CD14-positive monocyte (primary cell): ENCODE measurements at regions of chr11 and their contacts with region 1.

Region 1: DNA sequence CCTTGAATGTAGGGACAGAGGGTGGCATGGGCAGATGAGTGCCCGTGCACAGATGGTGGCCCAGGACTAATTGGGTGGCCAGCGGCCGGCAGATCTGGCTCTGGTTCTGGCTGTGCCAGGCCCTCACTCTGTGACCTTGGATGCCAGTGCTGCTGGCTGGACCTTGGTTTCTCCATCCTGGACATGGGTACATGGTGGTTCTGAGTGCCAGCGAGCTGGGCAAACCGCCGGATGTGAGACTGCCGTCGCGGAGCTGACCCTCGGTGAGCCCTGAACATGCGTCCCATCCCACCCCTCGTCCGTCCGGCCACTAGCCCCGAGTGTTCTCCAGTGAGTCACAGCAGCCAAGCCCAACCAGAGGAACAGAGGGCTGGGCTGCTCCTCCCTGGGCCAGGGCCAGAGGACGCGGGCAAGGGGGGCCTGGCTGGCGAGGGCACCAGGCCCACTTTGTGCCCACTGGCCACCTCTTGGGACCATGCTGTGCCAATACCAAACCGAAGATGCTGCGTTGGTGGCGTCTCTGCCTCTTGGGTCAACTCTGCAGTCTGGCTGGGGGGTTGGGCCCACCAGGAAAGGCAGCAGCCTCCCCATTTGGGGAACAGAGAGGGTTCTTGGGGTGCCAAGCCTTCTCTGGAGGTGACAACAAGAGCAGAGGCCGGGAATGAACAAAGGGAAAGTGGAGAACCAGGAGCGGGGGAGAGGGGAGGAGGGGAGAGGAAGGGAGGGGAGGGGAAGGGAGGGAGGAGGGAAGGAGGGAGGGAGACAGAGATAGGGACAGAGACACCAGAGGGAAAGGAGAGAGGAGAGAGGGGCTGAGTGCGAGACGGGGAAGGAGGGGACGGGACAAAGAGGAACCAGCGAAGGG is 10.7 kb downstream of the LSP1 start:
- DNase-seq: peak; percentile 79 to 84 (median 84)
- H3K4me3 ChIP-seq: peak overlapping the region in 1 of 3 experiments; percentile 57
- H3K4me3 Mint-ChIP-seq: peak overlapping the region; percentile 65 to 69
- H3K27ac ChIP-seq: peak overlapping the region; percentile 70 to 81
- H3K27ac Mint-ChIP-seq: peak overlapping the region in 6 of 7 donors; percentile 83 to 96 (median 90)
- H3K4me1 ChIP-seq: peaks cover 42 to 58% of the 10 kb centered on the region in 2 donors
- H3K4me1 Mint-ChIP-seq: peaks cover 14% of the 10 kb centered on the region
- H3K27me3 ChIP-seq: no peaks in the 10 kb centered on the region
- H3K27me3 Mint-ChIP-seq: peaks cover 3 to 4% (median 4%) of the 10 kb centered on the region in 3 donors
- CTCF ChIP-seq: no peak

Region 2: GRCh38 chr11:1844221-1845094 is 19.1 kb before region 1 on chr11:
- intact Hi-C with region 1: loop called in 1 of 2 experiments (anchors 2 kb)
- DNase-seq: peak; percentile 81 to 89 (median 86)
- H3K4me3 ChIP-seq: peak overlapping the region in 2 of 3 experiments; percentile 13 to 45
- H3K4me3 Mint-ChIP-seq: peak overlapping the region; percentile 63 to 92
- H3K27ac ChIP-seq: peak overlapping the region; percentile 93
- H3K27ac Mint-ChIP-seq: peak overlapping the region; percentile 93 to 100 (median 99)
- H3K4me1 ChIP-seq: peaks cover 100% of the 10 kb centered on the region in 2 donors
- H3K4me1 Mint-ChIP-seq: peaks cover 82% of the 10 kb centered on the region
- H3K27me3 ChIP-seq: no peaks in the 10 kb centered on the region
- H3K27me3 Mint-ChIP-seq: peaks cover 0 to 1% (median 1%) of the 10 kb centered on the region in 3 donors
- CTCF ChIP-seq: no peak